ENCODE measurements at regions of chr4 and their contacts with region 1.

Region 1: GRCh38 chr4:107757864-107758476 is 37.9 kb upstream of the PAPSS1 start:
- DNase-seq: no peak
- H3K4me3 ChIP-seq: no peak overlapping the region
- H3K4me3 Mint-ChIP-seq: no peak overlapping the region
- H3K27ac Mint-ChIP-seq: no peak overlapping the region
- H3K4me1 ChIP-seq: no peaks in the 10 kb centered on the region
- H3K4me1 Mint-ChIP-seq: no peaks in the 10 kb centered on the region
- H3K27me3 ChIP-seq: no peaks in the 10 kb centered on the region
- H3K27me3 Mint-ChIP-seq: no peaks in the 10 kb centered on the region
- CTCF ChIP-seq: peak; percentile 30 to 37

Region 2: GRCh38 chr4:107719922-107720722 is 37.8 kb before region 1 on chr4 and contains the start of gene PAPSS1:
- CTCF ChIA-PET with region 1: no interaction called
- POLR2A ChIA-PET with region 1: no interaction called
- intact Hi-C with region 1: loop called (anchors 1 kb)
- DNase-seq: peak; percentile 95 to 97
- H3K4me3 ChIP-seq: peak within 1 kb of the TSS; percentile 62
- H3K4me3 Mint-ChIP-seq: peak within 1 kb of the TSS; percentile 95
- H3K27ac Mint-ChIP-seq: peak within 1 kb of the TSS; percentile 87
- H3K4me1 ChIP-seq: 0 out of 2 replicates have a peak, but pooled peaks cover 5% of the 10 kb centered on the region
- H3K4me1 Mint-ChIP-seq: peaks cover 18% of the 10 kb centered on the region
- H3K27me3 ChIP-seq: no peaks in the 10 kb centered on the region
- H3K27me3 Mint-ChIP-seq: no peaks in the 10 kb centered on the region
- CTCF ChIP-seq: no peak
- total RNA-seq, gene PAPSS1: 60.1 and 66.1 TPM in 2 replicates

Region 3: GRCh38 chr4:107824353-107825071 is 66.5 kb after region 1 on chr4 and contains the start of gene SGMS2:
- CTCF ChIA-PET with region 1: no interaction called
- POLR2A ChIA-PET with region 1: no interaction called
- intact Hi-C with region 1: loop called (anchors 2 kb)
- DNase-seq: peak; percentile 74 to 78
- H3K4me3 ChIP-seq: peak within 1 kb of the TSS; percentile 53
- H3K4me3 Mint-ChIP-seq: peak within 1 kb of the TSS; percentile 96
- H3K27ac Mint-ChIP-seq: peak within 1 kb of the TSS; percentile 93
- H3K4me1 ChIP-seq: no peaks in the 10 kb centered on the region; the same call in 1 of the 2 replicates
- H3K4me1 Mint-ChIP-seq: peaks cover 13% of the 10 kb centered on the region
- H3K27me3 ChIP-seq: no peaks in the 10 kb centered on the region
- H3K27me3 Mint-ChIP-seq: peaks cover 3% of the 10 kb centered on the region
- CTCF ChIP-seq: no peak
- total RNA-seq, gene SGMS2: 3.4 and 5.6 TPM in 2 replicates

Region 4: GRCh38 chr4:107913281-107913899 is 155.4 kb after region 1 on chr4:
- CTCF ChIA-PET with region 1: no interaction called
- POLR2A ChIA-PET with region 1: no interaction called
- intact Hi-C with region 1: loop called (anchors 1 kb)
- DNase-seq: peak; percentile 39 to 71
- H3K4me3 ChIP-seq: no peak overlapping the region
- H3K4me3 Mint-ChIP-seq: no peak overlapping the region
- H3K27ac Mint-ChIP-seq: no peak overlapping the region
- H3K4me1 ChIP-seq: peaks cover 11% of the 10 kb centered on the region
- H3K4me1 Mint-ChIP-seq: peaks cover 6% of the 10 kb centered on the region
- H3K27me3 ChIP-seq: no peaks in the 10 kb centered on the region
- H3K27me3 Mint-ChIP-seq: no peaks in the 10 kb centered on the region
- CTCF ChIP-seq: peak; percentile 56 to 70

Measured in Caco-2 (cell line).